HepG2 (cell line): ENCODE measurements at regions of chr12 and their contacts with region 1.

Region 1: DNA sequence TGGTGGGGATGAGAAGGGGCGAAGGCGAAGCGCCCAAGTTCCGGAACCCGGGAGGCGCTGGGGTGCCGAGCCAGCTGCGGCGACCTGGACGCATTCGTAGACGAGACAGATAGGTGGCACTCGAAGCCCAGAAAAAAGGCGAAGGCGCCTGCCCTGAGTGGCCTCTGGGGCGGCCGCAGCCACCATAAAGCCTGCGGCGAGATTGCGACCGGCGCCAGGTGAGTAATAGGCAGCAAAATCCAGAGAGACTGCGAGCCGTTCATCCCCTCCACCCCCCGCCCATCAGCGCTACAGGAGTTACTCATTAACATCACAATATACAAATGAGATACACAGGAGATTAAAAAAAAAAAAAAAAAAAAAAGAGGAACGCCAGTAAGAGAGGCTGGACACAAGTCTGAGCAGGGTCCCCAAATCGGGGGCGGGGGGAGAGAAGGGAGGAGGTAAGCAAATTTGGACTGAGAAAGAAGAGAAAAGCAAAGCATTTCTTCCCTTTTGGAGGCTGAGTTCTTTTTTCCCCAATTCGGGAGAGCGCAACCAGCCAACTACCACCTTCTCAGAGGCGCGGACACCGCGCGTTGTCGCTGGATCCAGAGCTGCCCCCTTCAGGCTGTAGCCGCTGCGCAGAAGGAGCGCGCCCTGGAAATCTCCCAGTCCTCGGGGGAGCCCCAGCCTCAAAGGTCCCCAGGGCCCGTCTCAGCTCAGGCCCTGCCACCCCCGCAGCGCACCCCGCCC is 15.7 kb downstream of the TBX3 start:
- DNase-seq: peak; percentile 93
- ATAC-seq: peak; percentile 89
- H3K4me3 ChIP-seq: peak overlapping the region; percentile 64 to 81 (median 79)
- H3K27ac ChIP-seq: peak overlapping the region; percentile 79
- H3K4me1 ChIP-seq: peaks cover 45% of the 10 kb centered on the region
- H3K27me3 ChIP-seq: no peaks in the 10 kb centered on the region
- CTCF ChIP-seq: peak; percentile 90
- EP300 ChIP-seq: 0 out of 4 replicates have a peak, but pooled peaks of 1 of the 2 experiments have one; percentile 18
- POLR2A ChIP-seq: peak in 1 of 2 experiments; percentile 29; a peak in 1 of 4 replicates
- RAD21 ChIP-seq: peak; percentile 96

Region 2: DNA sequence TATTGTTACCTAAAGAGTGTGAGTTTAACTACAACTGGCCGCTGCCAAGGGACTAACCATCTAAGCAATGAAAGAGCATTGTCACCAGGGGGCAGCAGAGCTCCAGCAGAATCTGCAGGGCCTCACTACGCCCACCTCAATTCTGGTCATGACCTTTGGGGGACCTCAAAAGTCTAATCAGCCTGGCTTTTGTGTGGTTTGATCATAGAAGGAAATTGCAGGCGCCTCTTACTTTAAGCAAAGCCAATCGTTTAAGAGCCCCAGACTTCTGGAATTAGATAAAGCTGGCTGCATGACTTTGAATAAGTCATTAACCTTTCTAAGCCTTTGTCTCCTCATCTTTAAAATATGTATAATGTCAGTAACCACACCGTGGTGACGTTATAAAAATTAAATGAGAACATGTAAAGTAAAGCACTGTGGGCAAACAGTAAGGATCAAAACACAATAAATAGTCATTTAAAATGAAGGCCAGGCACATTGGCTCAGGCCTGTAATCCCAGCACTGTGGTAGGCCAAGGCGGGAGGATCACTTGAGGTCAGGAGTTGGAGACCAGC is 42.9 kb before region 1 on chr12:
- CTCF ChIA-PET with region 1: no interaction called
- POLR2A ChIA-PET with region 1: no interaction called
- in situ Hi-C with region 1: loop called (anchors 5 kb)
- intact Hi-C with region 1: loop called (anchors 2 kb)
- DNase-seq: peak; percentile 74
- ATAC-seq: peak; percentile 95
- H3K4me3 ChIP-seq: no peak overlapping the region
- H3K27ac ChIP-seq: no peak overlapping the region
- H3K4me1 ChIP-seq: peaks cover 35% of the 10 kb centered on the region
- H3K27me3 ChIP-seq: no peaks in the 10 kb centered on the region
- CTCF ChIP-seq: peak; percentile 92
- EP300 ChIP-seq: no peak
- POLR2A ChIP-seq: no peak
- RAD21 ChIP-seq: peak; percentile 90

Region 3: GRCh38 chr12:114799574-114800487 is 131.5 kb after region 1 on chr12:
- CTCF ChIA-PET with region 1: no interaction called
- POLR2A ChIA-PET with region 1: interaction called, 25 read pairs
- in situ Hi-C with region 1: no loop called
- intact Hi-C with region 1: no loop called
- DNase-seq: peak; percentile 100
- ATAC-seq: peak; percentile 99
- H3K4me3 ChIP-seq: no peak overlapping the region
- H3K27ac ChIP-seq: peak overlapping the region; percentile 85
- H3K4me1 ChIP-seq: peaks cover 46% of the 10 kb centered on the region
- H3K27me3 ChIP-seq: no peaks in the 10 kb centered on the region
- CTCF ChIP-seq: peak; percentile 36; the same call in 1 of the 2 replicates
- EP300 ChIP-seq: peak; percentile 91 to 98
- POLR2A ChIP-seq: peak; percentile 66 to 67
- RAD21 ChIP-seq: peak; percentile 65

Region 4: GRCh38 chr12:115468087-115468510 is 799.8 kb after region 1 on chr12:
- CTCF ChIA-PET with region 1: no interaction called
- POLR2A ChIA-PET with region 1: no interaction called
- in situ Hi-C with region 1: loop called (anchors 25 kb)
- intact Hi-C with region 1: loop called (anchors 1 kb)
- DNase-seq: peak; percentile 88
- ATAC-seq: peak; percentile 100
- H3K4me3 ChIP-seq: peak overlapping the region; percentile 50 to 64 (median 54)
- H3K27ac ChIP-seq: peak overlapping the region; percentile 76
- H3K4me1 ChIP-seq: peaks cover 17% of the 10 kb centered on the region
- H3K27me3 ChIP-seq: no peaks in the 10 kb centered on the region
- CTCF ChIP-seq: peak; percentile 90
- EP300 ChIP-seq: peak in 1 of 2 experiments; percentile 30; a peak in 1 of 4 replicates
- POLR2A ChIP-seq: peak; percentile 21 to 58; a peak in 2 of 4 replicates
- RAD21 ChIP-seq: peak; percentile 82

Region 5: DNA sequence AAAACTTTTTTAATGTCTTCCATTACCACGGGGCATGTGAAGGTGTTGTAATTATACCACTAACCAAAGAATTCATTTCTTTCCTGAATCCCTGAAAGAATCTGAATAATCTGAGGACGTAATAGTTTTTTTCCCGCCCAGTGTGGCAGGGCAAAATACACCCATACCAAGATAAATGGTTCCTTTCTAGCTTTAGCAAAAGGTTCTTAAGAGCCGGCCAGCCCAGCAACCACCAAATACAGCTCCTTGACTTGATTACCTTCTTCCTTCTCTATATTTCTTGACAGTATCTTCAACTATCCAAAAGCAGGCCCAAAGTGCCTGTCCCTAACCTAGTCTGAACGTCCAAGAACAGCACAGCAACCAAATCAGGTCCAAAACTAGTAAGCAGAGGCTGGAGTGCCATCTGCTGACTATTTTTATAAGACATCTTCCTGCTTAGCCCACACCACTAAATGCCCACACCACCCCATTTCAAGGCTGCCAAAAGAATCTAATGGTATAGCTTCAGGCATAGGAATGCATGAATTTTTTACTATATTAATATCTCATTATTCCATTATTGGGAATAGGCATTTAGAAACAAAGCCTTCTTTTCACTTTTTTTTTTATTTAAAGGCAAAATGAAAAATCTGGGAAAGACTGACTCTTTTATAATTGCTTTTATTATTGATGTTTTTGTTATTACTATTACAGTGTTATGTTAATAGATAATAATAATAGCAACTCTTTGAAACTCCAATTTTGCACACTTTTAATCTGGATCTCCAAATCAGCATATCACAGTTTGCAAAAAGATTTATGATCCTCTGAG is 1084.8 kb after region 1 on chr12:
- CTCF ChIA-PET with region 1: interaction called, 15 read pairs
- POLR2A ChIA-PET with region 1: no interaction called
- in situ Hi-C with region 1: loop called (anchors 5 kb)
- intact Hi-C with region 1: no loop called
- DNase-seq: peak; percentile 58
- ATAC-seq: peak; percentile 82
- H3K4me3 ChIP-seq: no peak overlapping the region
- H3K27ac ChIP-seq: no peak overlapping the region
- H3K4me1 ChIP-seq: peaks cover 8% of the 10 kb centered on the region; the same call in 1 of the 2 replicates
- H3K27me3 ChIP-seq: peaks cover 0 to 16% of the 10 kb centered on the region in 2 experiments; a peak in 3 of 5 replicates
- CTCF ChIP-seq: peak; percentile 79
- EP300 ChIP-seq: no peak
- POLR2A ChIP-seq: no peak
- RAD21 ChIP-seq: peak; percentile 59; the same call in 1 of the 2 replicates